ENCODE measurements at regions of chr11 and their contacts with region 1.

Region 1: DNA sequence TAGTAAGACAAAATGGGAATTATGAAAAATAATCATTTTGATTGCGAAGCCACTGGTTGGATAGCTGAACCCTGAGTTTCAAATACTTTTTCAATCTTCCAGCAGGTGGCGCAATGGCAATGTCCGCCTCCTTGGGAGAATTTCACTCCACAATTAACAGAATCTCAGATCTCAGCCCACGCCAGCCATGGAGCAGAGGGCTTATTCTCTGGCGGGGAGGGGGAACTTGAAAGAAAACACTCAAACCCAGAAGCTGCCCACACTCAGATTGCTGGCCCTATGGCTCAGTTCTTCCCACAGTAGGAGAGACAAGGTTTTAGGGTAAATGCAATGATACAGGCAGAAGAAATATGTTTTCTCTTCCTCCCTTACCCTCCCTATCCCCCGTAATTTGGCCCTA is 38.7 kb upstream of the RCN1 start:
- DNase-seq: peak in 3 of 4 donors; percentile 38 to 66 (median 47)
- ATAC-seq: peak; percentile 70
- H3K4me3 ChIP-seq: no peak overlapping the region
- H3K27ac ChIP-seq: no peak overlapping the region
- H3K4me1 ChIP-seq: no peaks in the 10 kb centered on the region
- H3K27me3 ChIP-seq: peaks cover 0 to 6% of the 10 kb centered on the region in 2 donors
- CTCF ChIP-seq: peak; percentile 57 to 71

Region 2: DNA sequence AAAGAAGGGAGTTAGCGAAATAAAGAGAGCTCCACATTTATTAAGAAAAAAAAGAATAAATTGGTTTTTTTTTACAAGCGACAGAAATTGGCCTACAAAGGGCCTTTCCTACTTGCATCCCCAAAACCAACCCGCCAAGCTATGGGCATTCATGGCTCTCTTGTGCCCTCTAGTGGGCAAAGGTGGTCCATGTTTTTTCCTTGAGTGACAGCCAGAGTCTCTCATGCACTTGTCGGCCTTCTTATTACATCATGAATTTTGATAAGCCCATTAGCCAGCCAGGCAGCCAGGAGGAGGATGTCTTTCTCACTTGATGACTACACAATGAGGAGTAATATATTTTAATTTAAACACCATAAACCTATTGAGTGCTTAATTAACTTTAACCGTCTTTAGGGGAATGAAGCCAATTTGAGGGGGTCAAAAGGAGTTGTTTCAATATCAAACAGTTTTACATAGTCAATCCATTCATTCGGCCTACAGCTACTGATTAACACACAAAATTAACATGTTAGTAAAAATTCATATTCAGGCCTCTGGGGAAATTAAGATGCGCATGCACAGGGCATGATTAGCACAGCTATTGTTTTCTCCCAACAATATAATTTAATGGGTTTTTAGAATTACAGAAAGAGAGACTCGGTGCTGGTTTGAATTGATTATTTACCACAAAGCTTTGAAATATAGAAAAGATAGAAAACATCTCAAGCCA is 124.2 kb after region 1 on chr11:
- intact Hi-C with region 1: loop called (anchors 2 to 10 kb)
- DNase-seq: peak in 3 of 4 donors; percentile 45 to 88 (median 80)
- ATAC-seq: peak; percentile 93
- H3K4me3 ChIP-seq: no peak overlapping the region
- H3K27ac ChIP-seq: no peak overlapping the region
- H3K4me1 ChIP-seq: no peaks in the 10 kb centered on the region
- H3K27me3 ChIP-seq: peaks cover 0 to 12% of the 10 kb centered on the region in 2 donors
- CTCF ChIP-seq: peak; percentile 81 to 83

Measured in left lung (tissue), 14 donors.